Lower leg skin (tissue), 4 donors: ENCODE measurements at regions of chr22 and their contacts with region 1.

Region 1: DNA sequence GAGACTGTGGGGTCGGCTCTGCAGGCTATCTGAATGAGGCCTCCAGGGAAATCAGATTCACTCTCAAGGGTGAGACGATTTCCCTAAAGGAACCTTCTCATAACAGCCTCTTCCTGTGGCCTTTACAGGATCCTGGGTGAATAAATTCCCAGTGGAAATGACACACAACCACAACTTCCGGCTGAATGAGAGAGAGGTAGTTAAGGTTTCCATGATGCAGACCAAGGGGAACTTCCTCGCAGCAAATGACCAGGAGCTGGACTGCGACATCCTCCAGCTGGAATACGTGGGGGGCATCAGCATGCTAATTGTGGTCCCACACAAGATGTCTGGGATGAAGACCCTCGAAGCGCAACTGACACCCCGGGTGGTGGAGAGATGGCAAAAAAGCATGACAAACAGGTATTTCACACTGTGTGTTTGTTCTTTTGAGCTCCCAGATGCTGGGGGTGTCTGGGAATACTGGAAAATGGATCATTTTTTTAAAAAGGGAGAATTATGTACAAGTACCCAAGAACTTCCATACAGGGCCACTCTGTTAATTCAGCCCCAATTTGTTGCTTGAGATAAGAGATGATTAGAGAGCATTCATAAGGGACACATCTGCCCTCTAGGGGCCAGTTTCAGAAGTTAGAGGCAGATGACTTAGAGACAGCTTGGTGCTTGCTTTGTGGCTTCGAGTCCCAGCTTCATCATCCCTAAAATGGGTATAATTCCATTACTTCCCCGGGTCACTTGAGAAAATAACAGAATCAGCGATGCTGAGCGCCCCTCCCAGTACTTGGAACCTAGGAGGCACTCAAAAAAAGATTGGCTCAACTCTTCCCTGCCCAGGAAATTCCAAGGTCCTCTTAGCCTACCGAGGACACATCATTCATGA is 10.2 kb downstream of the SERPIND1 start:
- DNase-seq: peak in 1 of 2 donors; percentile 27
- H3K4me3 ChIP-seq: no peak overlapping the region
- CTCF ChIP-seq: no peak
- POLR2A ChIP-seq: no peak

Region 2: DNA sequence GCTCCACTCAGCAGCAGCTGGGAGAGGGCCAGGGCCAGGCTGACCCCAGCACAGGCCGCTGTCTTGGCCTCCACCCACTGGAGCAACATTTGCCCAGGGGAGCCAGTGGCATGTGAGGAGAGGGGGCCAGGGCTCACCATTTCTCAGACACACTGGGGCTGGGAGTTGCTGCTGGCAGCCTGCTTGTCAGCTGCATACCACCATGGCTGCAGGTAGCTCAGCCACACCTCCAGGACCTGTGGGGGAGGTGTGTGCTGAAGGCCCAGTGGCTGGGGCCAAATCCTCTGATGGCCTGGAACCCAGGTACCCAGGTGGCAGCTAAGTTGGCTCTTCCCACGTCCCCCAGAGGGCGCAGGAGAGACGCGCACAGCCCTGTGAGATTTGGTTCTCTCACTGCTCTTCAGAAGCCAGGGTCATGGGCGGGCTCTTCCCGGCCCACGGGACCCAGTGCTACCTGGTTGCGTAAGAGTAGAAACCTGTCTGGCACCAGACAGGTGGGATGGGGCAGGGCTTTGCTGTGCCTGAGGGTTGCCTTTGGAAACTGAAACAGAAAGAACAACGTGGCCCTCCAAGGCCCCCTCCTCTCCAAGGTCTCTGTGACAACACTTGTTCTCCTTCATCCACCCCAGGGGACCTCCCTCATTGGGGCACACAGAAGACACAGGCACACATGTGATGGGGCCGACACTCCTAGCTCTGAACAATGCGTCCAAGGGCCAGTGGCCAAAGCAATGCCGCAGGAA is 177.9 kb before region 1 on chr22:
- intact Hi-C with region 1: loop called (anchors 10 kb)
- DNase-seq: peak in 1 of 2 donors; percentile 66
- H3K4me3 ChIP-seq: no peak overlapping the region
- CTCF ChIP-seq: no peak
- POLR2A ChIP-seq: no peak